ENCODE measurements at regions of chr18 and their contacts with region 1.

Region 1: GRCh38 chr18:77061946-77062517 is 70.6 kb downstream of the MBP start:
- DNase-seq: no peak
- H3K4me3 Mint-ChIP-seq: peak overlapping the region; percentile 60
- H3K27ac Mint-ChIP-seq: peak overlapping the region; percentile 98
- H3K4me1 Mint-ChIP-seq: peaks cover 83% of the 10 kb centered on the region
- H3K27me3 Mint-ChIP-seq: no peaks in the 10 kb centered on the region

Region 2: DNA sequence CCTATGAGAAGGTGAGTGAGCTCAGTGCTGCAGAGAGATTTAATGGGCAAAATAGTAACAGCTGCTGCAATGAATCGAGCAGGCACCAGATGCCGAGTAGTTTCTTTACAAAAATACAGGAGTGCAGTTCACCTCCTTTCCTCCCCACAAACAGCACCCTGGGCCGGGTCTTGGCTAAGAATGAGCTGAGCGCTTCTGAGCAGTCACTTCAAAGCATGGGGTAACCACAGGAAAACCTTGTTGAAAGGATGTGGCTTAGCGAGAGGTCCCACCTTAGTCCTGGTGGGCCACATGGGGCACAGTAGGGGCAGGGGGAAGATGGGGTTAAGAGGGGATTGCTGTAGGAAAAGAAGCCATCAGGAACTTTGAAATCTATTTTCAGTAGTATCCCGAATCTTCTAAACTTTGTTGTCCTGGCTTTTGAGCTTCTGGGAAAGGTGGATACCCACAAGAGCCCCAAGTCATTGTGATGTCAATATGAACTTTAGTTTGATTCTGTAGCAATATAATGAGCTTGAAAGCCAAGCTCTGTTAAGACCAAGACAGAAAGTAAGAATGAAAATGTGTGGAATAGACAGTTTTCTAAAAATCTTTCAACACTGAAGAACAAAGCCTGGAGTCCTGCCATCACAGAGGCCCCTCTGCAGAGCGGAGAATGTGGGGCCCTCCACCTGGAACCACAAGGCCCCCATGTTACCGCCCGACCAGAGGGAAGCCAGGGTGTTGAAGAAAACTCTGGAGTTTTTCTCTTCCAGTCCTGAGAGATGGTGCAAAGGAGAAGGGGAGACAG is 340.6 kb before region 1 on chr18:
- intact Hi-C with region 1: no loop called
- DNase-seq: peak; percentile 83
- H3K4me3 Mint-ChIP-seq: peak overlapping the region; percentile 53
- H3K27ac Mint-ChIP-seq: peak overlapping the region; percentile 83
- H3K4me1 Mint-ChIP-seq: peaks cover 42% of the 10 kb centered on the region
- H3K27me3 Mint-ChIP-seq: peaks cover 3% of the 10 kb centered on the region

Region 3: GRCh38 chr18:76859474-76860339 is 202.3 kb before region 1 on chr18:
- intact Hi-C with region 1: loop called (anchors 2 kb)
- DNase-seq: peak; percentile 30
- H3K4me3 Mint-ChIP-seq: peak overlapping the region; percentile 51
- H3K27ac Mint-ChIP-seq: peak overlapping the region; percentile 93
- H3K4me1 Mint-ChIP-seq: peaks cover 44% of the 10 kb centered on the region
- H3K27me3 Mint-ChIP-seq: no peaks in the 10 kb centered on the region

Region 4: DNA sequence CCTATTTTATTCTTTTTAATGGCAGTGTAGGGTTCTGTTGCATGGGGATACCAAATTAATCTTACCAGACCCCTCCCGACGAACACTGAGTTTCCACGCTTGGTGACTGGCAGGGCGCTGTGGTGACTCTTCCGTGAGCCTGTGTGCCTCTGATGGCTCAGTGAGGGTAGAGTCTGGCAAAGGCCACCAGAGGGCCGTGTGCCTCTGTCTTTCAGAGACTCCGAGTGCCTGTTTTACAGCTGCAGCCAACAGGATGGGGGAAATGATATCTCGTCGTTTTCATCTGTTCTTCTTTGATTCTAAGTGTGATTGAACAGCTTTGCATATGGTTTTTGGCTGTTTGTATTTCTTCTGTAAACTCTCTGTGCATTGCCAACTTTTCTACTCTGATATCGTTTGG is 139.9 kb before region 1 on chr18:
- intact Hi-C with region 1: loop called (anchors 5 kb)
- DNase-seq: peak; percentile 53
- H3K4me3 Mint-ChIP-seq: no peak overlapping the region
- H3K27ac Mint-ChIP-seq: no peak overlapping the region
- H3K4me1 Mint-ChIP-seq: peaks cover 21% of the 10 kb centered on the region
- H3K27me3 Mint-ChIP-seq: no peaks in the 10 kb centered on the region

Region 5: GRCh38 chr18:77079954-77080682 is 18.1 kb after region 1 on chr18:
- intact Hi-C with region 1: no loop called
- DNase-seq: no peak
- H3K4me3 Mint-ChIP-seq: no peak overlapping the region
- H3K27ac Mint-ChIP-seq: no peak overlapping the region
- H3K4me1 Mint-ChIP-seq: peaks cover 41% of the 10 kb centered on the region
- H3K27me3 Mint-ChIP-seq: no peaks in the 10 kb centered on the region

Region 6: DNA sequence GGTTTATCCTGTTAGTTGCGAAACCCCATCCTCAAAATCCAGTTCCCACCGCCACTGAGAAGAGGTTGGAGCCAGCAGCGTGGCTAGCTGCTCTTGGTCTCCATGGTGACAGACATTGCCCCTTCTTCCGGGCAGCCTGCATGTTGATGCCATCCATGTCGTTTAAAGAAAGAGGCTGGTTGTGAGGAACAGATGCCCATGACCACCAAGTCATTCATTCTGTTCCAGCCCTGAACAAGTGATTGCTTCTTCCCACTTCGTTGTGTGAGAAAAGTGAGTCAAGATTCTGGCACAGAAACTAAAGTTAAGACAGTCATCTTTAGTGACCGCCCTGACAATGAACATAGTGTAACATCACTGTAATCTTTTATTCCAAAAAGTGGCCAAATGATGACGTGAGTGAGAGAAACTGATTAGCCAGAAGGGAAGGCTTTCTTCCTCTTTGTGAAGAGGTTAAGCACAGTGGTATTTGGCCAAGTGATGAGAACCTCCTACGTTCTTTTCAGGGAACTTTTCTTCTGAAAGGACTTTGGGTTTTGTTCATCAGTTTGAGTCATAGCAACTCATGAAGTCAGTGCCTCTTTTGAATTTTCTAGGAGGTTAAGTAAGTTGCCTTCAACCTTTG is 460.1 kb after region 1 on chr18:
- intact Hi-C with region 1: no loop called
- DNase-seq: no peak
- H3K4me3 Mint-ChIP-seq: no peak overlapping the region
- H3K27ac Mint-ChIP-seq: no peak overlapping the region
- H3K4me1 Mint-ChIP-seq: no peaks in the 10 kb centered on the region
- H3K27me3 Mint-ChIP-seq: no peaks in the 10 kb centered on the region